ENCODE measurements at regions of chr10 and their contacts with region 1.

Region 1: DNA sequence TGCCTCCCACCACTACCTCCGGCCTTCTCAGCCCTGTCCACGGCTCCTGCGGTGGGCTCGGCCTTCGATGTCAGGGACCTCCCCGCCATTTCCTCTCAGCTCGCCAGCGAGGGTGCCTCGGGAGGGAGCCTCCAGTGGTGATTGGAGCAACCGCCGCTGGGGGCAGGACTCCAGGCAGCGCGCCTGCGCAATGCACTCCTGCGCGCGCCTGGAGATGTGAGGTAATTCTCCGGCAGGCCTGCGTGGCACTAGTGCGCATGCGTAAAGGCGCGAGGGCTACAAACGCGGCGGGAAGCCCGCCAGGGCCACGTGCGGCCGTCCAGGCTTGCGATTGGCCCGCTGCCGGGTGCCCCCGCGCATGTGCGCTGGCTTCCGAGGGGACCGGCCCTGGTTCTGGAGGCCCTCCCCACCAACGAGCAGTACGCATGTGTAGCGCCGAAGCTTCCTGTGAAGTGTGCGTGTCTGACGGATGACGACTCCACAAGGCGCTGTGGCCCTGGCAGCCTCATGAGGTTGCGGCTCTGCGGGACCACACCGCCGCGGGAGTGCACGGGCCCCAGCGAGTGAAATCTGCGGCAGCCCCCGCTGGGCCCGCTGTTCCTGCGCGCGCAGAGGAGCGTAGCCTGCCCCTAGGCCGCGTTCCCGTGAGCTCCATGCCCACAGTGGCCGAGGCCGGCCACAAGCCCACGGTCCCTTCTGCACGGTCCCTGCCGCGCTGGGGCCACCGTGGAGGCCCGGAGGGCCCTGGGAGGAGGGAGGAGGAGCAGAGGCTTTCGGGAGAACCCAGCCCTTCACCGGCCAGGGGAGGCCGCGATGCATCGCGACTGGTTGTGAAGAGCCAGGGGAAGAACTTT is at the start of gene SYCE1:
- DNase-seq: peak in 4 of 5 donors; percentile 35 to 62 (median 60)
- H3K4me3 ChIP-seq: no peak within 1 kb of the TSS
- H3K27ac ChIP-seq: no peak within 1 kb of the TSS
- H3K4me1 ChIP-seq: no peaks in the 10 kb centered on the region
- H3K27me3 ChIP-seq: no peaks in the 10 kb centered on the region
- CTCF ChIP-seq: no peak
- EP300 ChIP-seq: no peak
- POLR2A ChIP-seq: no peak
- total RNA-seq, gene SYCE1: 0.53 to 3.2 (median 2.5) TPM in 6 of 7 donors, not detected in the other

Region 2: DNA sequence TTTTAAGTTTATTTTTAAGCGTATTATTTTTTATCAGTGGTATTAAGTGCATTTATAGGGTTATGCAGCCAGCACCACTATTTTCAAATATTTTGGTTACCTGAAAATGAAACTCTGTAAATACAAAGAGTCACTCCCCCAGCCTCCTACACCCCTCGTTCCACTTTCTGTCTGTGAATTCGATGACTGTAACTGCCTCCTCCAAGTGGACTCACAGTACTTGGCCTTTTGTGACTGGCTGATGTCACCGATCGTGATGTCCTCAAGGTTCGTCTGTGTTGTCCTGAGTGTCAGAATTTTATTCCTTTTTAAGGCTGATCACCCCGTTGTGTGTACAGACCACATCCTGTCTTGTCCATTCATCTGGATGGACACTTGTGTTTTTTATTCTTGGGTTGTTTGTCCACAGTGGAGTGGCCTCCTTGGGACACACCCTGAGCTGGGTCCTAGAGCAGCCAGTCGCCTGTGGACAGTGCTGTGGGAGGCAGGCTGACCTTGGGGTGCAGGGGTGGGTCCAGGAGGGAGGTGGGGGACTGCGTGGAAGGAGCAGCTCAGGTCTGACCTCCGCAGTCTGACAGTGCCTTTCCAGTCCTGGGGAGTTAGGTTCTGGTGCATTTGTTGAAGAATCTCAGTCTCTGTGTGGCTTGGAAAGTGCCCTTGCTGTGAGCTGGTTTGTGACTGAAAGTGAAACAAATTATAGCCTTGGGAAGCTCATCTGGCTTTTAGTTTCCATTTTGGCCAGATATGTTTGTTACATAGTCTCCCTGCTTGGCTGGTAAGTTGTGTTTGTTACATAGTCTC is 164.8 kb before region 1 on chr10:
- intact Hi-C with region 1: no loop called
- DNase-seq: peak in 1 of 5 donors; percentile 6
- H3K4me3 ChIP-seq: no peak overlapping the region
- H3K27ac ChIP-seq: no peak overlapping the region
- H3K4me1 ChIP-seq: no peaks in the 10 kb centered on the region
- H3K27me3 ChIP-seq: no peaks in the 10 kb centered on the region
- CTCF ChIP-seq: no peak
- EP300 ChIP-seq: no peak
- POLR2A ChIP-seq: no peak

Region 3: GRCh38 chr10:133422821-133423771 is 142.6 kb before region 1 on chr10:
- intact Hi-C with region 1: loop called in 1 of 4 experiments (anchors 5 kb)
- DNase-seq: peak in 1 of 5 donors; percentile 17
- H3K4me3 ChIP-seq: no peak overlapping the region
- H3K27ac ChIP-seq: no peak overlapping the region
- H3K4me1 ChIP-seq: peaks cover 3% of the 10 kb centered on the region
- H3K27me3 ChIP-seq: no peaks in the 10 kb centered on the region
- CTCF ChIP-seq: no peak
- EP300 ChIP-seq: no peak
- POLR2A ChIP-seq: no peak

Region 4: GRCh38 chr10:133453516-133454203 is 112.0 kb before region 1 on chr10 and contains the start of gene SCART1:
- intact Hi-C with region 1: no loop called
- DNase-seq: no peak
- H3K4me3 ChIP-seq: no peak within 1 kb of the TSS
- H3K27ac ChIP-seq: no peak within 1 kb of the TSS
- H3K4me1 ChIP-seq: no peaks in the 10 kb centered on the region
- H3K27me3 ChIP-seq: no peaks in the 10 kb centered on the region
- CTCF ChIP-seq: no peak
- EP300 ChIP-seq: no peak
- POLR2A ChIP-seq: no peak
- total RNA-seq, gene SCART1: 0.72 to 5.0 (median 3.6) TPM